ENCODE measurements at regions of chr3 and their contacts with region 1.

Region 1: DNA sequence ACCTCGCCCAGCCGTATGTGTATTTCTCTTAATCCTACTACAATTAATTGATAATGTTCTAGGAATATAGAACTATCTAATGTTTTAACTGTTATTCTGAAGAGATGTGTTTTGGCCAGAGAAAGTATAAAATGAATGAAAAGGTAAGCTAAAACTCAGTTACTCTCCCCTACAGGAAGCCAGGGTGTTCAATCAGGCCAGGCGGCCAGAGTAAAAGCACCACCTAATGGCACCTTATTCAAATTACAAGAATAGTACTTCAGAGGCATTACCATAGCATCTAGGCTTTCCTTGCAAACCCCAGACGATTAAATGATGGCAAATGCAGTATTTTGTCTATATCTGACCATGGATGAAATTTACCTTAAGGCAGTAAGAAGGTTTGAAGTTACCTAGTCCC is 10.4 kb downstream of the SLC12A8 start:
- DNase-seq: peak; percentile 49
- ATAC-seq: peak; percentile 78
- H3K4me3 Mint-ChIP-seq: no peak overlapping the region
- H3K27ac Mint-ChIP-seq: no peak overlapping the region
- H3K4me1 Mint-ChIP-seq: peaks cover 5% of the 10 kb centered on the region
- H3K27me3 Mint-ChIP-seq: peaks cover 11% of the 10 kb centered on the region
- CTCF ChIP-seq: peak; percentile 39

Region 2: GRCh38 chr3:124928333-124929202 is 273.6 kb before region 1 on chr3:
- CTCF ChIA-PET with region 1: interaction called, 11 read pairs
- POLR2A ChIA-PET with region 1: no interaction called
- intact Hi-C with region 1: loop called (anchors 10 kb)
- DNase-seq: peak; percentile 85
- ATAC-seq: peak; percentile 55
- H3K4me3 Mint-ChIP-seq: no peak overlapping the region
- H3K27ac Mint-ChIP-seq: no peak overlapping the region
- H3K4me1 Mint-ChIP-seq: peaks cover 5% of the 10 kb centered on the region
- H3K27me3 Mint-ChIP-seq: peaks cover 16% of the 10 kb centered on the region
- CTCF ChIP-seq: peak; percentile 77

Region 3: DNA sequence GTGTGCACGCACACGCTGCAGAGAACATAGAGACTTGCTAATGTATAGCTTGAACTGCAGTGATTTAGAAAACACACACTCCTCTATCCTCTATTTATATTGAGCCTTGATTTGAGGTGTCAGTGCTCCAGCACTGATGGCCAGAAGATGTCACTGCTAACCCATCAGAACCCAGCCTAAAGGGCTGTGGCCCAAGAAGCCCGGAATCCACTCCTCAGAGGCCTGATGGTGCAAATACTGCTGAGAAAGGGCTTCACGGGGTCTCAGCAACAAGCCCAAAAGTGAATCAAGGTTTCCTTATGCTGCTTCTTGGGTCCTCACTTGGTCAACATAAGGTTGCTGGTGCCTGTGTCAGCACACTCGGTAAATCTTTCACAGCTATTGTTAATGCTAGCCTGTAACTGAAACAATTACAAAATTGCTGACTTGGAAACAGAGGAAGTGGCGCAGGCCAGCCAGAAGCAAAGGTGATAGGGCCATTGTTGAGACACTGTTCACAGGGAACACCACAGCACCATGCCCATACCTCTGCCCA is 206.7 kb before region 1 on chr3:
- CTCF ChIA-PET with region 1: interaction called, 7 read pairs
- POLR2A ChIA-PET with region 1: no interaction called
- intact Hi-C with region 1: loop called (anchors 5 kb)
- DNase-seq: peak; percentile 54
- ATAC-seq: peak; percentile 85
- H3K4me3 Mint-ChIP-seq: no peak overlapping the region
- H3K27ac Mint-ChIP-seq: no peak overlapping the region
- H3K4me1 Mint-ChIP-seq: no peaks in the 10 kb centered on the region
- H3K27me3 Mint-ChIP-seq: no peaks in the 10 kb centered on the region
- CTCF ChIP-seq: peak; percentile 59

Region 4: DNA sequence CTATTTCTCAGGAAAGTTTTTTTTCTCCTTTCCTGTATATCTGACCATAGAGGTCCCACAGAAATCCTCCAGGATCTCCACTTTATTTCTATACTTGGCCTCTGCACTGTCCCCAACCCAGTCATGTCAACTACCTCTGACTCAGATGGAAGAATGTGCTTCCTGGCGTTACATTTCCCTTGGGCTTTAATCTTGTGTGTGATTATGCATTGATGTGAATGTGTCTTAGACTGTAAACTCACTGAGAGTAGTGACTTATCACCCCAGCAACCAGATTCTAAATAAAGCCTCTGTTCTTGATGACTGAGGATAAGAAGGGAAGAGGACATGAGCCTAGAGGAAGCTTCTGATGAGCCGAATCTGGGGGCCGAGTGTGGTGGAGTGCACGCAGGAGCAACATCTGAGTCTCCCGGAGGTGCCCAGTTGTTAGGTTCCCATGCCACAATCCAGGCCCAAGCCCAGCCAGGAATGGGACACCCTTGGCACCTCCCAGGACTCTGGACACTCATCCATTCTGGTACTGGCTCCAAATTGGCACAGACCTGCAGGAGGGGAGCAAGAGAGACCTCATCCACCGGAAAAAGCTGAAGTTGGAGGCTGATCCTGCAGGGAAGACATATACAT is 114.3 kb before region 1 on chr3:
- CTCF ChIA-PET with region 1: no interaction called
- POLR2A ChIA-PET with region 1: no interaction called
- intact Hi-C with region 1: no loop called
- DNase-seq: no peak
- ATAC-seq: no peak
- H3K4me3 Mint-ChIP-seq: no peak overlapping the region
- H3K27ac Mint-ChIP-seq: no peak overlapping the region
- H3K4me1 Mint-ChIP-seq: no peaks in the 10 kb centered on the region
- H3K27me3 Mint-ChIP-seq: peaks cover 2% of the 10 kb centered on the region
- CTCF ChIP-seq: no peak

Region 5: DNA sequence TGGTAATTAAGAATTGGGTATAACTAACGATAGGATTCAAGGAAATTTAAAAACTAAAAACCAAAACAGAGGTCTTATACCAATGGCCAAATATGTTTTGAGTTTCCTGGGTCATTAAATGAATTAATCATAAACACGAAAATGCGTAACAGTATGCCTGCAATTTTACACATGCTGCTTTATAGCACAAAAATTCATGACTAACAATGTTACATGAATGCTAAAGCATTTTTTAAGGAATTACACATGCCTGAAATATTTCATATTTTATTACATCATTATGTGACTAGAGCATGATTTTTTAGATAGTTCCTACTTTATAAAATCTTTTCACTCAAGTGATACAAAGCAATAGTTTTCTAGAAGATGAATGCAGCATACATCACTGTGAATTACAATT is 98.2 kb after region 1 on chr3:
- CTCF ChIA-PET with region 1: no interaction called
- POLR2A ChIA-PET with region 1: no interaction called
- intact Hi-C with region 1: no loop called
- DNase-seq: no peak
- ATAC-seq: no peak
- H3K4me3 Mint-ChIP-seq: no peak overlapping the region
- H3K27ac Mint-ChIP-seq: no peak overlapping the region
- H3K4me1 Mint-ChIP-seq: peaks cover 35% of the 10 kb centered on the region
- H3K27me3 Mint-ChIP-seq: no peaks in the 10 kb centered on the region
- CTCF ChIP-seq: no peak

Region 6: DNA sequence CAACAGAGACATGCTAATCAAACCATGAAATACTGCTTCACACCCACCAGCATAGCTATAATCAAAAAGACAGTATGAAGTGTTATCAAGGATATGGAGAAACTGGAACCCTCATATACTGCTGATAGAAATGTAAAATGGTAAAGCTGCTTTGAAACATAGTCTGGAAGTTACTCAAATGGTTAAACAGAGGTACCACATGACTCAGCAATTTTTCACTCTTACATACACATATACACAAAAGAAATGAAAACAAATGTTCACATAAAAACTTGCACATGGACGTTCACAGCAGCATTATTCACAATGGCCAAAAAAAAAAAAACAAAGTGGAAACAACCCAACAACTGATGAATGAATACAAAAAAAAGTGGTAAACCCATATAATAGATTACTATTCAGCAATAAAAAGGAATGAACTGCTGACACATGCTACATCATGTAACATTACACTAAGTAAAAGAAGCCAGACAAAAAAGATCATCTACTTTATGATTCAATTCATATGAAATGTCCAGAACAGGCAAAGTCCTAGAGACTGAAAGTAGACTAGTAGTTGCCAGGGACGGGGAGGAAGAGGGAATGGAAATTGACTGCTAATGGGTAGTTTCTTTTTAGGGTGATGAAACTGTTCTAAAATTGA is 149.7 kb after region 1 on chr3:
- CTCF ChIA-PET with region 1: no interaction called
- POLR2A ChIA-PET with region 1: no interaction called
- intact Hi-C with region 1: no loop called
- DNase-seq: no peak
- ATAC-seq: peak; percentile 24
- H3K4me3 Mint-ChIP-seq: no peak overlapping the region
- H3K27ac Mint-ChIP-seq: peak overlapping the region; percentile 53
- H3K4me1 Mint-ChIP-seq: peaks cover 63% of the 10 kb centered on the region
- H3K27me3 Mint-ChIP-seq: no peaks in the 10 kb centered on the region
- CTCF ChIP-seq: no peak

Measured in activated CD8-positive, alpha-beta T cell treated with anti-CD3 and anti-CD28 coated beads for 36 hours (primary cell).